K562 (cell line): ENCODE measurements at regions of chr6 and their contacts with region 1.

Region 1: DNA sequence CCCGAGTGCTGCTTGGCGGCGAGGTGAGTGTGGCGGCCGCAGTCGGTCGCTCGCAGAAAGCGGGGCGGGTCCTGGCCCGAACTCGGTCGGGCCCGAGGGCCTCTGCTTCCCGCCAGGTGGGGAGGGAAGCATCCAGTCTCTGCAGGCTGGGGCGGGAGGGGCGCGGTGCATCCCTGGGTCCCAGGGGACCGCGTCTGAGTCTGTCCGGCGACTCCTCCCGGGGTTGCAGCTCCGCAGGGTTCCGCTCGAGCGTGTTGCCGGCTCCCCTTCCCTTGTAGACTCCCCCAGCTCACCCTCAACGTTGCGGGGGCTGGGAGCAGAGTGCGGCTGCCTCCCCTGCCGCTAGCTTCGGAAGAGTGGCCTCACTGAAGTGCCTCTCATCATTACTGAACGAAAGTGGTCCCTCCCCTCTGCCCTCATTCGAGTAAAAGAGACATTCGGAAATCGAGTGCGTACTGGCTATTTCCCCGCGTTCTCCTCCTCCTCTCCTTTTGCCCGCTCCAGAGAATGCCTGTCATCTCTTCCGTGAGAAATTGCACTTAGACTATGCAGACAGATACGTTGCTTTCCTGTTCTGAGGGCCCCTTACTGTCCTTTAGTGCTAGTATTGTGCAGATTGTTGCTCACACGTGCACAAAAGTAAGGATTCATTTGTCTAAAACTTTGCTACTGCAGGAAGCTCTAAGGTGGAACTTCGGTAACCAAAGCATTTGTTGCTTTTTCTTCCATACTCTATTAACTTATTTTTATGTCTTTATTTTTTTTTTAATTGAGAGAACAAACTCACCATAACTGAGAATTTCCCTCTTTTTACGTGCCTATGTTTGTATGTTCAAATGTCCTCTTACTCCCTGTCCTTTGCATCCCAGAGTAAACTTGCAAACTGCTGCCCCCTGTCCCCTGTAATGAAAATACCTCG is 751 bp downstream of the MAP3K4 start:
- DNase-seq: peak; percentile 84 to 91 (median 86)
- ATAC-seq: peak; percentile 77
- H3K4me3 ChIP-seq: peak overlapping the region; percentile 86
- H3K27ac ChIP-seq: peak overlapping the region; percentile 81
- H3K4me1 ChIP-seq: peaks cover 12% of the 10 kb centered on the region in 2 experiments; a peak in 4 of 5 replicates
- H3K27me3 ChIP-seq: no peaks in the 10 kb centered on the region
- CTCF ChIP-seq: peak; percentile 87 to 96 (median 92)
- EP300 ChIP-seq: peak; percentile 28; the same call in 1 of the 2 replicates
- POLR2A ChIP-seq: peak; percentile 58; the same call in 1 of the 2 replicates
- RAD21 ChIP-seq: peak; percentile 91 to 92

Region 2: DNA sequence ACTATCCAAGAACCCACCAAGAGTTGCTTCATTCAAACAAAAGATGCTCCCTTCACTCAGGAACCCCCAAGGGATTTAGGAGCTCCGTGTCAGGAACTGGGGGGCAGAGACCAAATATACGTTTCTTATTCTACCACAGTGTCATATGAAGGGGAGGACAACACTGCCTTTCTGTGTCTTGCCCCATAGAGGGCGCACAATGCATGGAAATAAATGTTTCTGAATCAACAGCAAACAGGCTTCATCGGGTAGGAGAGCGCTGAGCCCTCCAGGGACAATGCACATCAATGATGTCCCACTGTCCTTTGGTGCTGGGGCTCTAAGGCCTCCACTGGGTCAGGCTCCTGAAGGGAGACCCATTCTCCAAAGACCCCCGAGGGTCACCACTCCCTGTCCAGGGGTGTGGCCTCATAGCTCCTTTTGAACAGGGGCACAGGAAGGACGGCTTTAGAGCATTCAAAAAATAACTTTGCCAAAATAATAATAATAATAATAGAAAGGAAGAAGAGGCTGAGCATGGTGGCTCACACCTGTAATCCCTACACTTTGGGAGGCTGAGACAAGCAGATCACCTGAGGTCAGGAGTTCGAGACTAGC is 259.2 kb before region 1 on chr6:
- CTCF ChIA-PET with region 1: interaction called, 3 read pairs
- POLR2A ChIA-PET with region 1: interaction called, 4 read pairs
- in situ Hi-C with region 1: no loop called
- intact Hi-C with region 1: loop called (anchors 1 kb)
- DNase-seq: peak; percentile 43 to 79 (median 50)
- ATAC-seq: peak; percentile 94
- H3K4me3 ChIP-seq: no peak overlapping the region
- H3K27ac ChIP-seq: no peak overlapping the region
- H3K4me1 ChIP-seq: no peaks in the 10 kb centered on the region
- H3K27me3 ChIP-seq: no peaks in the 10 kb centered on the region
- CTCF ChIP-seq: peak; percentile 74 to 91 (median 86)
- EP300 ChIP-seq: no peak
- POLR2A ChIP-seq: no peak
- RAD21 ChIP-seq: peak; percentile 58 to 82

Region 3: GRCh38 chr6:160930547-160931377 is 61.6 kb before region 1 on chr6:
- CTCF ChIA-PET with region 1: no interaction called
- POLR2A ChIA-PET with region 1: interaction called, 3 read pairs
- in situ Hi-C with region 1: no loop called
- intact Hi-C with region 1: loop called (anchors 5 kb)
- DNase-seq: peak in 2 of 4 experiments; percentile 28
- ATAC-seq: no peak
- H3K4me3 ChIP-seq: no peak overlapping the region
- H3K27ac ChIP-seq: no peak overlapping the region
- H3K4me1 ChIP-seq: peaks cover 6 to 16% of the 10 kb centered on the region in 2 experiments; a peak in 4 of 5 replicates
- H3K27me3 ChIP-seq: no peaks in the 10 kb centered on the region; a peak in 1 of 5 replicates
- CTCF ChIP-seq: peak; percentile 34 to 40 (median 36); a peak in 3 of 6 replicates
- EP300 ChIP-seq: no peak
- POLR2A ChIP-seq: no peak
- RAD21 ChIP-seq: peak; percentile 27 to 78; a peak in 3 of 4 replicates

Region 4: DNA sequence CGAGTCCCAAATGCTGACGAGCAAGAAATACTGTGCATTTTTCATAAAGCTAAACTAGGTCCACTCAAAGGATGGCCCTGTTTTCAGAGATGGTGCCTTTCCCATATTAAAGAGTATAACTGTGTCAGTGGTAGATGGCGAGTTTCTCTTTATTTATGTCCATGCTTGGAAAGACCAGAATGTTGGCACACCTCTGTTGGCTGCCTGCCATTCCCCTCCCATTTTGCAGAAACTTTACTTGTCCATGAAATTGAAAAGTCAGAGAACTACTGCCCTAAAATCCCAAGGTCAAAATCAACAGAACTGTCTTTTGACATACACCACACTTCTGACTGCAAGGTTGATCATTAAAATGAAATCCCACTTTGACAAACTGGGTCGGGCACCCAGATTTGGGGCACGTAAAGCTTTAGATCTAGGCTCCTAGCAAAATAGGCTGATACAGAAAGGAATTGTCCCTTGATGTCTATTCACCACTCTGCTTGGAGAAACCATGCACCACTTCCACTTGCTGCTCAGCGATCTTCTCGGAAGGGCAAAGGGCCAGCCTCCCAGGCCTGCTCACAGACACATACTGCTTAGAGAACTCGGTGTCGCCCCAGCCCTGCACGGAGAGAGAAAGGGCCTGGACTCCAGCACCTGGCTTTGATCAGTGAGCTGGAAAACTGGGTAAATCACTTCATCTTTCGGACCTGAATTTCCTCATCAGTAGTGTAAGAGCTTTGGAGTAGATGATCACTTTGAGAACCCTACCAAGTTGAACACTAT is 151.5 kb after region 1 on chr6:
- CTCF ChIA-PET with region 1: no interaction called
- POLR2A ChIA-PET with region 1: interaction called, 3 read pairs
- in situ Hi-C with region 1: no loop called
- intact Hi-C with region 1: loop called (anchors 1 kb)
- DNase-seq: no peak
- ATAC-seq: no peak
- H3K4me3 ChIP-seq: no peak overlapping the region
- H3K27ac ChIP-seq: no peak overlapping the region
- H3K4me1 ChIP-seq: peaks cover 4 to 23% of the 10 kb centered on the region in 2 experiments; a peak in 3 of 5 replicates
- H3K27me3 ChIP-seq: no peaks in the 10 kb centered on the region
- CTCF ChIP-seq: no peak
- EP300 ChIP-seq: no peak
- POLR2A ChIP-seq: no peak
- RAD21 ChIP-seq: no peak

Region 5: GRCh38 chr6:161242779-161243693 is 250.7 kb after region 1 on chr6:
- CTCF ChIA-PET with region 1: no interaction called
- POLR2A ChIA-PET with region 1: interaction called, 26 read pairs
- in situ Hi-C with region 1: loop called (anchors 5 kb)
- intact Hi-C with region 1: no loop called
- DNase-seq: no peak
- ATAC-seq: peak; percentile 42
- H3K4me3 ChIP-seq: no peak overlapping the region
- H3K27ac ChIP-seq: no peak overlapping the region
- H3K4me1 ChIP-seq: peaks cover 7 to 20% of the 10 kb centered on the region in 2 experiments; a peak in 4 of 5 replicates
- H3K27me3 ChIP-seq: no peaks in the 10 kb centered on the region
- CTCF ChIP-seq: no peak
- EP300 ChIP-seq: no peak
- POLR2A ChIP-seq: no peak
- RAD21 ChIP-seq: no peak